Ascending aorta (tissue), 2 donors: ENCODE measurements at regions of chr1 and their contacts with region 1.

Region 1: GRCh38 chr1:230867903-230868735 is at the start of gene C1orf198:
- DNase-seq: peak in 1 of 2 donors; percentile 82
- H3K4me3 ChIP-seq: peak within 1 kb of the TSS; percentile 94 to 98
- H3K27ac ChIP-seq: peak within 1 kb of the TSS; percentile 96 to 99
- H3K4me1 ChIP-seq: peaks cover 9 to 29% of the 10 kb centered on the region in 2 donors
- H3K27me3 ChIP-seq: no peaks in the 10 kb centered on the region
- CTCF ChIP-seq: no peak
- total RNA-seq, gene C1orf198: 225 TPM

Region 2: GRCh38 chr1:230642263-230642959 is 225.7 kb before region 1 on chr1 and contains the start of gene COG2:
- intact Hi-C with region 1: loop called (anchors 10 kb)
- DNase-seq: peak; percentile 58 to 97
- H3K4me3 ChIP-seq: peak within 1 kb of the TSS; percentile 89 to 90
- H3K27ac ChIP-seq: peak within 1 kb of the TSS; percentile 80 to 91
- H3K4me1 ChIP-seq: peaks cover 8 to 11% of the 10 kb centered on the region in 2 donors
- H3K27me3 ChIP-seq: no peaks in the 10 kb centered on the region
- CTCF ChIP-seq: peak; percentile 99 to 100 (median 100)
- total RNA-seq, gene COG2: 8.4 TPM

Region 3: GRCh38 chr1:230807029-230807428 is 61.1 kb before region 1 on chr1:
- intact Hi-C with region 1: loop called (anchors 1 kb)
- DNase-seq: peak; percentile 40 to 86
- H3K4me3 ChIP-seq: no peak overlapping the region
- H3K27ac ChIP-seq: peak overlapping the region; percentile 76 to 82
- H3K4me1 ChIP-seq: peaks cover 0 to 23% of the 10 kb centered on the region in 2 donors
- H3K27me3 ChIP-seq: no peaks in the 10 kb centered on the region
- CTCF ChIP-seq: no peak

Region 4: DNA sequence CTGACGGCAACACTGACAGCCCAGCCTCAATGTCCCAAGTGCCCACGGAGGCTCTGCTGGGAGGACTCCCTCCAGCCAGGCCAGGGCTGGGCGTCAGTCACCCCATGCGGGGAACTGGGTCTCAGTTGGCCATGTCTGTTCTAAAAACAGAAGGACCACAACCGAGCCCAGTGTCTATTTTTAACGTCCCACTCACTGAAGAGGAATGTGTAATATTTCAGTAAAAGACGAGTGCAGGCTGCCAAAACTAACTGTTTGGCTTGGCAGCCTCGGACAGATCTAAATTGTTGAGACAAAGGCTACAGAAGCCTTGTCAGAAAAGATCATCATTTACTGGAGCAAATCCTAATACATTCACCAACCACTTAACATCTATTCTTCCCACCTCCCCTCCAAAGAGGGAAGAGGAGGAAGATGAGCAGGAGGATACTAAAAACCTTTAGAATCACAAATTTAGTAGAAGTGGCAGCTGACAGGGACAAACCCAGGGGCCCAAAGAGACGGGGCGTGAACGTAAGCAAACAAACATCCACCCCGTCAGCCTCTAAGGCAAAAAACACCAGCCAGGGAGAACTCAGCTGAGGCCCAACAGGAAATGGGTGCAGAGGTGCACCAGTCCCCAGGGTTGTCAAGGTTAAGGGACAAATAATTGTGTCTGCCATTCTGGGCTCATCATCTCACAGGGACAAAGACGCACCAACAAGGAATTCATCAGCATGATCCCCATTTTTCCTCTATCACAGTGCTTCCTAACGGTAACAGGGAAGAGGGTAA is 18.5 kb before region 1 on chr1:
- intact Hi-C with region 1: loop called (anchors 1 kb)
- DNase-seq: peak; percentile 56 to 95
- H3K4me3 ChIP-seq: peak overlapping the region in 1 of 2 donors; percentile 9
- H3K27ac ChIP-seq: peak overlapping the region; percentile 94 to 98
- H3K4me1 ChIP-seq: peaks cover 24 to 66% of the 10 kb centered on the region in 2 donors
- H3K27me3 ChIP-seq: no peaks in the 10 kb centered on the region
- CTCF ChIP-seq: no peak

Region 5: DNA sequence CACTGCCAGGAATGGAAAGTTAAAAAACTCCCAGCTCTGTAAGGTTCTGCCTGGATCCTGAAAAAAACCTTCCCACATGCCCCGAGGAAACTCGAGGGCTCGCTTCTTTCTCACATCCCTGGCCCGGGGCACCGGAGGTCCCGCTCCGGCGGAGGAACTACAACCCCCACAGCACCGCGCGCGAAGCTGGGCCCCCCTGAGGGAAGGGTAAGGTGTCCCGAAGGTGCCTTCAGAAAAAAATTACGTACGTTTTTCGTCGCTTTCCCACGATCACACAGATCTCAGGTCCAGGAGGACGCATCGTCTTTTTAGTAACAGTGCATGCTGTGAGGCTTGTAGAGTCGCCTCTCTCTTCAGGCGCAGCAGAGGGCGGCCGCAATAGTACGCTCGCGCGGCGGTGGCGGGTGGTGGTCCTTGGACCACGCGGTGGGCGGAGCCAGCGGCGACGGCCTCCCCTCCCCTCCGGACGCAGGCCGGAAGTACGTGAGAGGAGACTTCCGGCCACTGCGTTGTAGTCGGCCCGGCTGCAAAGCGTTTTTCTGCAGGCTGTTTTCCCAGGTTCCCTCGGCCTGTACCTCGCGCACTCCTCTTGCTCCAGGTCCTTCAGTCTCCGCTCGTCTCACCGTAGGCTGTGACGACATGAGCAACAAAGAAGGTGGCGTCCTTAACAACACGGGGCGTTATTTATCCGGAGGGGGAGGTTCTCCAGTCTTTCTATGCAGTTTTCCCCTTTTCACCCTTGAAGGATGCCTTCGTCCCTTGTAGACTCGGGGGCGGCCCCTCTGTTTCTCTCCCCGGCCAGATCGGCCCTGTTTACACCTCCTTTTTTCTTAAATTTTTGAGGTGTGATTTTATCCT is 660.3 kb after region 1 on chr1 and contains the start of gene TSNAX:
- intact Hi-C with region 1: loop called (anchors 10 kb)
- DNase-seq: peak; percentile 54 to 94
- H3K4me3 ChIP-seq: peak within 1 kb of the TSS; percentile 81 to 95
- H3K27ac ChIP-seq: peak within 1 kb of the TSS; percentile 85 to 98
- H3K4me1 ChIP-seq: peaks cover 0 to 22% of the 10 kb centered on the region in 2 donors
- H3K27me3 ChIP-seq: no peaks in the 10 kb centered on the region
- CTCF ChIP-seq: no peak
- total RNA-seq, gene TSNAX: 15.0 TPM